HEK293 (cell line): ENCODE measurements at regions of chr14 and their contacts with region 1.

Region 1: DNA sequence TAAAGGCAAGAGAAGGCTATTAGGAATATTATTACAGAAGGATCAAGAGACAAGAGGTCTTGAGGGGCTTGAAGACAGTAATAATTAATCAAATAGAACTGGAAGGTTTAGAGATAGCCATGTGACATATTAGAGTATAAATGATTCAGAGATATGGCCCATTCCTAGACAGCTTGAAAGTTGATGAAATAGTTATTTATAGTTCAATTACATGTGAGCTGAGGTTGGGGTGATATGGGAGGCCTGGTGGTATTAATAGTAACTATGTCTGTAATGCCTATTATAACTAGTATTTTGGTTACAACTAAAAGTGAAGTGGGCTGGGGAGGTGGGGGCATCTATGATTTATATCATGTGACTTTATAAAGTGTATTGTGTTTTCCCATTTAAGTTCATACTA is 14.1 kb upstream of the MIS18BP1 start:
- H3K4me3 ChIP-seq: no peak overlapping the region
- H3K27ac ChIP-seq: no peak overlapping the region
- H3K4me1 ChIP-seq: no peaks in the 10 kb centered on the region
- CTCF ChIP-seq: no peak

Region 2: GRCh38 chr14:44912041-44912869 is 354.8 kb before region 1 on chr14:
- CTCF ChIA-PET with region 1: interaction called, 73 read pairs
- POLR2A ChIA-PET with region 1: no interaction called
- H3K4me3 ChIP-seq: no peak overlapping the region
- H3K27ac ChIP-seq: no peak overlapping the region
- H3K4me1 ChIP-seq: no peaks in the 10 kb centered on the region
- CTCF ChIP-seq: no peak

Region 3: GRCh38 chr14:45253068-45253753 is 13.9 kb before region 1 on chr14 and contains the start of gene MIS18BP1:
- CTCF ChIA-PET with region 1: interaction called, 29 read pairs
- POLR2A ChIA-PET with region 1: interaction called, 5 read pairs
- H3K4me3 ChIP-seq: peak within 1 kb of the TSS; percentile 83
- H3K27ac ChIP-seq: peak within 1 kb of the TSS; percentile 84
- H3K4me1 ChIP-seq: peaks cover 5% of the 10 kb centered on the region; the same call in 1 of the 2 replicates
- CTCF ChIP-seq: peak; percentile 84

Region 4: DNA sequence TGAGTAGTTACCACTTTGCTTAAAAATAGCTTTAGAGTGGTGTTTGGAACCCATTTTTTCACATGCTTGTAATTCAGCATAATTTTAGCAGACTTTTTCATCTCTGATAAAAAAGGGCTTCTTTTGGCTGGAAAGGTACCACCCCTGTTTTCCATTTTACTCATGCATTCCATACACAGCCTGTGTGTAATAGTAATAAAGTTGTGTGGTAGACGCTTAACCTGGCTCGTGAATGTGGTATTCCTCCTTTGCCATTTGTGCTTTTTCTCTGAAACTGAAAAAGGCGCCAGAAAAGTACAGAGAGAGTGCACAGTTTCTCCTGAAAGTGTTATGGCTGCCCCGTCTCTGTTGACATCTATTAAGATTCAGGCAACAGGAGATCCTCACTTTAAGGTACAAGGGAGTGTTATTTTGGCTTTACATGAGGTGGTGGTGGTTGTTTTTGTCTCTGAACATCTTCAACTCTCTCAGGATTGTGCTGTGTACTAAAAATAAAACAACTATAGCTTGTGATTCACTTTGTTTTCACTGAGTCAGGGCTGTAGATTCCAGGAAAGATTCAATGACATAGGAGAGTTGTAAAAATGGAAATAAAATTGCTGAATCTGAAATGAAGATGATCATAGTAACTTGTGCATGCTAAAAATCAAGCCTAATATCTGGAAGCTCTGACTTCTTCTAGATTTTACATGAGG is 31.5 kb after region 1 on chr14:
- CTCF ChIA-PET with region 1: no interaction called
- POLR2A ChIA-PET with region 1: no interaction called
- H3K4me3 ChIP-seq: no peak overlapping the region
- H3K27ac ChIP-seq: no peak overlapping the region
- H3K4me1 ChIP-seq: no peaks in the 10 kb centered on the region
- CTCF ChIP-seq: no peak